GM10248 (cell line): ENCODE measurements at regions of chr6 and their contacts with region 1.

Region 1: DNA sequence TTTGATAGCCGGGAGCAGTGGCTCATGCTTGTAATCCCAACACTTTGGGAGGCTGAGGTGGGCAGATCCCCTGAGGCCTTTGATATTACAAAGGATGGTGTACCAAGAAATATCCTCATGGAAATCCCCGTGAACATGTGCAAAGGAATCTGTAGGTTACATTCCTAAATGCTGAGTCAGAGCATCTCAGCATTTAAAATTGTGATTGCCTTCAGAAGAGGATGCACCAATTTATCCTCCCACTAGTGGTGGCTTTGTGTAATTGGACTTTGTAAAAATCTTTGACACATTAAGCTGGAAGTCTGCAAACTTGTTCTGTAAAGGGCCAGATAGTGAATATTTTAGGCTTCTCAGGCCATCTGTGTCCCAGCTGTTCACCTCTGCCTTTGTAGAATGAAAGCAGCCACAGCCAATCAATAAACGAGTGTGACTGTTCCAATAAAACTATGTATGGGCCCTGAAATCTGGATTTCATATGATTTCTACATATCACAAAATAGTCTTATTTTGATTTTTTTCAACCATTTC is 11.8 kb downstream of the TMEM14B start:
- DNase-seq: peak; percentile 28
- CTCF ChIP-seq: peak; percentile 27

Region 2: GRCh38 chr6:10747251-10747972 is 12.0 kb before region 1 on chr6 and contains the start of gene TMEM14B:
- CTCF ChIA-PET with region 1: interaction called, 35 read pairs
- POLR2A ChIA-PET with region 1: no interaction called
- DNase-seq: peak; percentile 100
- CTCF ChIP-seq: no peak